ENCODE measurements at regions of chr5 and their contacts with region 1.

Region 1: GRCh38 chr5:150624334-150625163 is 15.9 kb upstream of the SYNPO start:
- DNase-seq: no peak
- H3K4me3 ChIP-seq: peak overlapping the region; percentile 56 to 87 (median 74)
- H3K27ac ChIP-seq: peak overlapping the region; percentile 84 to 91 (median 88)
- H3K4me1 ChIP-seq: peaks cover 0 to 57% (median 37%) of the 10 kb centered on the region in 4 donors
- H3K27me3 ChIP-seq: no peaks in the 10 kb centered on the region
- CTCF ChIP-seq: no peak
- EP300 ChIP-seq: no peak
- POLR2A ChIP-seq: no peak

Region 2: GRCh38 chr5:150599917-150600499 is 24.5 kb before region 1 on chr5:
- intact Hi-C with region 1: no loop called
- DNase-seq: peak; percentile 86
- H3K4me3 ChIP-seq: no peak overlapping the region
- H3K27ac ChIP-seq: peak overlapping the region in 3 of 4 donors; percentile 15 to 53 (median 43)
- H3K4me1 ChIP-seq: peaks cover 0 to 28% (median 19%) of the 10 kb centered on the region in 4 donors
- H3K27me3 ChIP-seq: no peaks in the 10 kb centered on the region
- CTCF ChIP-seq: no peak
- EP300 ChIP-seq: no peak
- POLR2A ChIP-seq: no peak

Region 3: GRCh38 chr5:150640311-150641005 is 15.9 kb after region 1 on chr5 and contains the start of gene SYNPO:
- intact Hi-C with region 1: loop called (anchors 2 kb)
- DNase-seq: peak; percentile 91
- H3K4me3 ChIP-seq: peak within 1 kb of the TSS in 1 of 4 donors; percentile 16
- H3K27ac ChIP-seq: peak within 1 kb of the TSS; percentile 72 to 86 (median 80)
- H3K4me1 ChIP-seq: peaks cover 0 to 91% (median 83%) of the 10 kb centered on the region in 4 donors
- H3K27me3 ChIP-seq: no peaks in the 10 kb centered on the region
- CTCF ChIP-seq: no peak
- EP300 ChIP-seq: no peak
- POLR2A ChIP-seq: no peak
- total RNA-seq, gene SYNPO: 7.1 to 23.5 (median 11.1) TPM

Measured in sigmoid colon (tissue), 7 donors.